ENCODE measurements at regions of chr12 and their contacts with region 1.

Region 1: GRCh38 chr12:115916910-115917668 is 360.4 kb downstream of the MED13L start:
- DNase-seq: peak; percentile 50
- H3K4me3 Mint-ChIP-seq: no peak overlapping the region
- H3K27ac Mint-ChIP-seq: no peak overlapping the region
- H3K4me1 Mint-ChIP-seq: no peaks in the 10 kb centered on the region
- H3K27me3 Mint-ChIP-seq: peaks cover 38% of the 10 kb centered on the region
- CTCF ChIP-seq: peak; percentile 91

Region 2: GRCh38 chr12:113980537-113981337 is 1936.4 kb before region 1 on chr12:
- CTCF ChIA-PET with region 1: interaction called, 30 read pairs
- POLR2A ChIA-PET with region 1: no interaction called
- intact Hi-C with region 1: loop called (anchors 5 kb)
- DNase-seq: peak; percentile 79
- H3K4me3 Mint-ChIP-seq: no peak overlapping the region
- H3K27ac Mint-ChIP-seq: no peak overlapping the region
- H3K4me1 Mint-ChIP-seq: no peaks in the 10 kb centered on the region
- H3K27me3 Mint-ChIP-seq: peaks cover 40% of the 10 kb centered on the region
- CTCF ChIP-seq: peak; percentile 95

Region 3: GRCh38 chr12:114625294-114625851 is 1291.7 kb before region 1 on chr12:
- CTCF ChIA-PET with region 1: interaction called, 19 read pairs
- POLR2A ChIA-PET with region 1: no interaction called
- intact Hi-C with region 1: loop called (anchors 1 kb)
- DNase-seq: peak; percentile 61
- H3K4me3 Mint-ChIP-seq: no peak overlapping the region
- H3K27ac Mint-ChIP-seq: no peak overlapping the region
- H3K4me1 Mint-ChIP-seq: no peaks in the 10 kb centered on the region
- H3K27me3 Mint-ChIP-seq: no peaks in the 10 kb centered on the region
- CTCF ChIP-seq: peak; percentile 64

Region 4: DNA sequence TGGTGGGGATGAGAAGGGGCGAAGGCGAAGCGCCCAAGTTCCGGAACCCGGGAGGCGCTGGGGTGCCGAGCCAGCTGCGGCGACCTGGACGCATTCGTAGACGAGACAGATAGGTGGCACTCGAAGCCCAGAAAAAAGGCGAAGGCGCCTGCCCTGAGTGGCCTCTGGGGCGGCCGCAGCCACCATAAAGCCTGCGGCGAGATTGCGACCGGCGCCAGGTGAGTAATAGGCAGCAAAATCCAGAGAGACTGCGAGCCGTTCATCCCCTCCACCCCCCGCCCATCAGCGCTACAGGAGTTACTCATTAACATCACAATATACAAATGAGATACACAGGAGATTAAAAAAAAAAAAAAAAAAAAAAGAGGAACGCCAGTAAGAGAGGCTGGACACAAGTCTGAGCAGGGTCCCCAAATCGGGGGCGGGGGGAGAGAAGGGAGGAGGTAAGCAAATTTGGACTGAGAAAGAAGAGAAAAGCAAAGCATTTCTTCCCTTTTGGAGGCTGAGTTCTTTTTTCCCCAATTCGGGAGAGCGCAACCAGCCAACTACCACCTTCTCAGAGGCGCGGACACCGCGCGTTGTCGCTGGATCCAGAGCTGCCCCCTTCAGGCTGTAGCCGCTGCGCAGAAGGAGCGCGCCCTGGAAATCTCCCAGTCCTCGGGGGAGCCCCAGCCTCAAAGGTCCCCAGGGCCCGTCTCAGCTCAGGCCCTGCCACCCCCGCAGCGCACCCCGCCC is 1248.8 kb before region 1 on chr12:
- CTCF ChIA-PET with region 1: interaction called, 16 read pairs
- POLR2A ChIA-PET with region 1: no interaction called
- intact Hi-C with region 1: loop called (anchors 1 kb)
- DNase-seq: peak; percentile 92
- H3K4me3 Mint-ChIP-seq: peak overlapping the region; percentile 72
- H3K27ac Mint-ChIP-seq: no peak overlapping the region
- H3K4me1 Mint-ChIP-seq: peaks cover 7% of the 10 kb centered on the region
- H3K27me3 Mint-ChIP-seq: no peaks in the 10 kb centered on the region
- CTCF ChIP-seq: peak; percentile 64

Region 5: DNA sequence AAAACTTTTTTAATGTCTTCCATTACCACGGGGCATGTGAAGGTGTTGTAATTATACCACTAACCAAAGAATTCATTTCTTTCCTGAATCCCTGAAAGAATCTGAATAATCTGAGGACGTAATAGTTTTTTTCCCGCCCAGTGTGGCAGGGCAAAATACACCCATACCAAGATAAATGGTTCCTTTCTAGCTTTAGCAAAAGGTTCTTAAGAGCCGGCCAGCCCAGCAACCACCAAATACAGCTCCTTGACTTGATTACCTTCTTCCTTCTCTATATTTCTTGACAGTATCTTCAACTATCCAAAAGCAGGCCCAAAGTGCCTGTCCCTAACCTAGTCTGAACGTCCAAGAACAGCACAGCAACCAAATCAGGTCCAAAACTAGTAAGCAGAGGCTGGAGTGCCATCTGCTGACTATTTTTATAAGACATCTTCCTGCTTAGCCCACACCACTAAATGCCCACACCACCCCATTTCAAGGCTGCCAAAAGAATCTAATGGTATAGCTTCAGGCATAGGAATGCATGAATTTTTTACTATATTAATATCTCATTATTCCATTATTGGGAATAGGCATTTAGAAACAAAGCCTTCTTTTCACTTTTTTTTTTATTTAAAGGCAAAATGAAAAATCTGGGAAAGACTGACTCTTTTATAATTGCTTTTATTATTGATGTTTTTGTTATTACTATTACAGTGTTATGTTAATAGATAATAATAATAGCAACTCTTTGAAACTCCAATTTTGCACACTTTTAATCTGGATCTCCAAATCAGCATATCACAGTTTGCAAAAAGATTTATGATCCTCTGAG is 164.0 kb before region 1 on chr12:
- CTCF ChIA-PET with region 1: interaction called, 8 read pairs
- POLR2A ChIA-PET with region 1: no interaction called
- intact Hi-C with region 1: loop called (anchors 2 kb)
- DNase-seq: peak; percentile 66
- H3K4me3 Mint-ChIP-seq: no peak overlapping the region
- H3K27ac Mint-ChIP-seq: no peak overlapping the region
- H3K4me1 Mint-ChIP-seq: no peaks in the 10 kb centered on the region
- H3K27me3 Mint-ChIP-seq: peaks cover 52% of the 10 kb centered on the region
- CTCF ChIP-seq: peak; percentile 64

Region 6: GRCh38 chr12:115934046-115934445 is 17.0 kb after region 1 on chr12:
- CTCF ChIA-PET with region 1: interaction called, 10 read pairs
- POLR2A ChIA-PET with region 1: no interaction called
- intact Hi-C with region 1: no loop called
- DNase-seq: no peak
- H3K4me3 Mint-ChIP-seq: no peak overlapping the region
- H3K27ac Mint-ChIP-seq: no peak overlapping the region
- H3K4me1 Mint-ChIP-seq: no peaks in the 10 kb centered on the region
- H3K27me3 Mint-ChIP-seq: no peaks in the 10 kb centered on the region
- CTCF ChIP-seq: no peak

Region 7: DNA sequence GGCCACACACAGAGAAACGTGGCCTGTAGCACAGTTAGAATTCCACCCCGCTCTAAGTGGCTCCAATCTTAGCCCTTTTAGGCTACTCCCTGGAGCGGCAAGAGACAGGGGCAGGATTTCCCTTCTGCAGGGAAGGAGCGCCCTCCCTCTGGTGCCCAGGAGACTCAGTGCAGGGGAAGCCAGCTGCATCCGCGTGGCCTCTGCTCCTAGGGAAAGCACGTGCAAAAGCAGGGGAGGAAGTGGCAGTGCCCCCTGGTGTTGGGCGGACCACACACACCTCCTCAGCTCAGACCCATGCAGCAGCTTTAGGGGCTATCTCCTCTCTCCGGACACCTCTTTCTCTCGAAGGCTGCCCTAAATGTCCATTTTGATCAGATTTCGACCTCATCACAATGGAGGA is 770.8 kb after region 1 on chr12:
- CTCF ChIA-PET with region 1: no interaction called
- POLR2A ChIA-PET with region 1: no interaction called
- intact Hi-C with region 1: no loop called
- DNase-seq: peak; percentile 14
- H3K4me3 Mint-ChIP-seq: no peak overlapping the region
- H3K27ac Mint-ChIP-seq: no peak overlapping the region
- H3K4me1 Mint-ChIP-seq: peaks cover under 1% of the 10 kb centered on the region
- H3K27me3 Mint-ChIP-seq: peaks cover 17% of the 10 kb centered on the region
- CTCF ChIP-seq: peak; percentile 24